PC-3 (cell line): ENCODE measurements at regions of chr9 and their contacts with region 1.

Region 1: DNA sequence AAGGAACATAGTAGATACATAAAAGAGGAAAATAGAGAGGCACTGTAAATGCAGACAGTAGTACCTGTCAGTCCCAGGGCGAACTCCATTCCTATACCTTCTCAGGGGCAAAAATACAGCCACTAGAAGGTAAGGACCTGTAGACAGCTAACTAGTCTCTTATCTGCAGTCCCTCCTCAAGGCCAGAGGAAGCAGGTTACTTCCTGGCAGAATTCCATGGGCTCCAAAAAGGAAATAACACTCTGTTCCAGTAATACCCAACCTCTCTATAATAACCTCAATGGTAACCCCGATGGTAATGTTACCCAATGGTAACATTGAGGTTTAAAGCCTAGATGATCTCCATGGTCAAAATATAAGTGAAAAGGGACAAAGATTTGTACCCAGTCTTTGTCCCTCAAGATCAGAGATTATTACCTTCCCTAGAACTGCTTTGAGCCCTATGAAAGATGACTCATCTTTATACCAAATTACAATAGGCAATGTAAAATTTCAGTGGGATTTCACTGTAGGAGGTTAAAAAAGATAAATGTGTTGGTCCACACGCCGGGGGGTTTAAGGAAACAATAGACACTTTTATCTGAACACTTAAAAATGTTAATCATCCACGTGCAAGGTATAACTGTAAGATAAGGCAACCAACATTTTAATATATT is 113.0 kb downstream of the DENND1A start:
- DNase-seq: no peak
- ATAC-seq: no peak
- H3K4me3 ChIP-seq: no peak overlapping the region
- H3K27ac ChIP-seq: no peak overlapping the region
- H3K4me1 ChIP-seq: no peaks in the 10 kb centered on the region
- H3K27me3 ChIP-seq: no peaks in the 10 kb centered on the region
- CTCF ChIP-seq: no peak

Region 2: DNA sequence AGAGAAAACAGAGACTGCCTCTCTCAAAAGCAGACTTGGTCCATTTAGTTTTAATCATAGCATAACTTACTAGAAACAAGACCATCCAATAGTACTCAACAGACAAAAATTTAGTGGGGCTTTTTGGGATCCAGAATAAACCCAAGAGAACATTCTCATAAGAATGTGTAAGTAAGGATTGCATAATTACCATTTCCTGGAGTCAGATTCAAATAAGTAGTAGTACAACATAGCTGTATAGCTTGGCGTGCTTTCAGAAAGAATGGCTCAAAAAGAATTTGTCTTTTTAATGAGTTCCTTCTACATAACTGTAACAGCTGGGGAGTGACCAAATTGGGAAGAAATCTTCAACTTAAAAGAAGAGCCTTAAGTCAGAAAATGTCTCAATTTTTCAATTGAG is 32.4 kb before region 1 on chr9:
- CTCF ChIA-PET with region 1: no interaction called
- POLR2A ChIA-PET with region 1: no interaction called
- intact Hi-C with region 1: no loop called
- DNase-seq: no peak
- ATAC-seq: no peak
- H3K4me3 ChIP-seq: no peak overlapping the region
- H3K27ac ChIP-seq: no peak overlapping the region
- H3K4me1 ChIP-seq: no peaks in the 10 kb centered on the region
- H3K27me3 ChIP-seq: no peaks in the 10 kb centered on the region
- CTCF ChIP-seq: no peak

Region 3: GRCh38 chr9:123922911-123923310 is 106.0 kb after region 1 on chr9:
- CTCF ChIA-PET with region 1: interaction called, 10 read pairs
- POLR2A ChIA-PET with region 1: no interaction called
- intact Hi-C with region 1: no loop called
- DNase-seq: no peak
- ATAC-seq: no peak
- H3K4me3 ChIP-seq: no peak overlapping the region
- H3K27ac ChIP-seq: no peak overlapping the region
- H3K4me1 ChIP-seq: peaks cover 46% of the 10 kb centered on the region
- H3K27me3 ChIP-seq: no peaks in the 10 kb centered on the region
- CTCF ChIP-seq: no peak